ENCODE measurements at regions of chrX and their contacts with region 1.

Region 1: GRCh38 chrX:150771121-150771538 is 77.9 kb downstream of the MTMR1 start:
- DNase-seq: no peak
- H3K4me3 ChIP-seq: no peak overlapping the region
- H3K27ac ChIP-seq: no peak overlapping the region
- H3K4me1 ChIP-seq: no peaks in the 10 kb centered on the region
- H3K27me3 ChIP-seq: no peaks in the 10 kb centered on the region
- CTCF ChIP-seq: no peak
- POLR2A ChIP-seq: no peak

Region 2: DNA sequence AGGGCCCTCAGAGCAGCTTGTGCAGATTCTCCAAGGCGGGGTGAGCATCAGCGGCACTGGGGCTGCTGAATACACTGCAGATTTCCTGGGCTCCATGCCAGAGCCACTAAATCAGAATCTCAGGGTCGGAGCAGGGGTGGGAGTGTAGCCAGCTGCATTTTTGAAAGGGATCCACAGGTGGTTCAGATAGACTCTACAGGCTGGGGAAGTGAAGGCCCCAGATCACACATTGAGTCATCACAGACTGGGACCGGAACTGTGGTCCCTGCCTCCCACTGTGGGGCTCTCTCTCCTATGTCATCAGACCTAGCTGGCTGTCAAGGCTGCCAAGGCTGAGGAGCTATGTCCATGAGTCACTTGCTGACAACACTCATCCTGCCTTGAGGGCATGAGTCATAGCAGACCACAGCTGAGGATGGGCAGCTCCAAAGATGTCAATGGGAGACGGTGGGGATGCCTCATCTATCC is 570.3 kb before region 1 on chrX:
- intact Hi-C with region 1: no loop called
- DNase-seq: peak; percentile 50 to 65
- H3K4me3 ChIP-seq: no peak overlapping the region
- H3K27ac ChIP-seq: peak overlapping the region in 1 of 2 donors; percentile 24
- H3K4me1 ChIP-seq: no peaks in the 10 kb centered on the region
- H3K27me3 ChIP-seq: no peaks in the 10 kb centered on the region
- CTCF ChIP-seq: no peak
- POLR2A ChIP-seq: no peak

Region 3: GRCh38 chrX:150627957-150628356 is 143.2 kb before region 1 on chrX:
- intact Hi-C with region 1: no loop called
- DNase-seq: no peak
- H3K4me3 ChIP-seq: no peak overlapping the region
- H3K27ac ChIP-seq: no peak overlapping the region
- H3K4me1 ChIP-seq: no peaks in the 10 kb centered on the region
- H3K27me3 ChIP-seq: no peaks in the 10 kb centered on the region
- CTCF ChIP-seq: no peak
- POLR2A ChIP-seq: no peak

Region 4: GRCh38 chrX:151081016-151081415 is 309.9 kb after region 1 on chrX:
- intact Hi-C with region 1: loop called (anchors 2 kb)
- DNase-seq: no peak
- H3K4me3 ChIP-seq: no peak overlapping the region
- H3K27ac ChIP-seq: no peak overlapping the region
- H3K4me1 ChIP-seq: no peaks in the 10 kb centered on the region
- H3K27me3 ChIP-seq: no peaks in the 10 kb centered on the region
- CTCF ChIP-seq: no peak
- POLR2A ChIP-seq: no peak

Measured in uterus (tissue), 4 donors.